ENCODE measurements at regions of chr6 and their contacts with region 1.

Region 1: GRCh38 chr6:46419576-46420002 is 71.7 kb downstream of the RCAN2 start:
- DNase-seq: peak; percentile 78
- H3K4me3 Mint-ChIP-seq: no peak overlapping the region
- H3K27ac Mint-ChIP-seq: no peak overlapping the region
- H3K4me1 Mint-ChIP-seq: peaks cover 7% of the 10 kb centered on the region
- H3K27me3 Mint-ChIP-seq: peaks cover 11% of the 10 kb centered on the region
- CTCF ChIP-seq: peak; percentile 73

Region 2: DNA sequence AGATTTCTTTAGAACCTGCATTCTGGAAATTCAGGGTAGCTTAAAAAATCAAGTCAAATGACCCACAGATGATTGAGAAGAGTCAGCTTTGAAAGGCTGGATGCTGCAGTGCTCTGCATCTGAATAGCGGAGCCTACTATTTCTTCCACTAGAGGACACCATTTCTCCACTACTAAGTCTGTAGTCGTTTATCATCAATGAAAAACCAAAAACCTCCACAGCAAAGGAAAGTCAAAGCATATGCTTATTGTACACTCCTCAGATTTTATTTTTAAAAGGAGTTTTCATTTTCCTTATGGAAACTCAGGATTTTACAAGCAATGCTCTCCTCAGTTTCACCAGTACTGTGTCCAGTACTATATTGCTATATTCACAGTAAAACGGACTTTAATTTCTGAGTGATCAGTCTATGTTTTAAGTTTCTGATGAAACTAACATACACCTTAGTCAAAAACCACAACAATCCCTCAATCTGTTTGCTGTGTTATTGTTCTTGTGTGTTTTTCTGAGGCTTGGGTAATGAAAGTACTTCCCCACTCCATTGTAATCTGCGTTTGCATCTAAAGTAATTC is 198.3 kb before region 1 on chr6:
- CTCF ChIA-PET with region 1: interaction called, 24 read pairs
- POLR2A ChIA-PET with region 1: no interaction called
- intact Hi-C with region 1: no loop called
- DNase-seq: peak; percentile 47
- H3K4me3 Mint-ChIP-seq: no peak overlapping the region
- H3K27ac Mint-ChIP-seq: no peak overlapping the region
- H3K4me1 Mint-ChIP-seq: peaks cover 5% of the 10 kb centered on the region
- H3K27me3 Mint-ChIP-seq: no peaks in the 10 kb centered on the region
- CTCF ChIP-seq: peak; percentile 65

Region 3: GRCh38 chr6:46491628-46492547 is 72.3 kb after region 1 on chr6:
- CTCF ChIA-PET with region 1: interaction called, 5 read pairs
- POLR2A ChIA-PET with region 1: no interaction called
- intact Hi-C with region 1: loop called (anchors 1 kb)
- DNase-seq: peak; percentile 37
- H3K4me3 Mint-ChIP-seq: peak overlapping the region; percentile 68
- H3K27ac Mint-ChIP-seq: no peak overlapping the region
- H3K4me1 Mint-ChIP-seq: peaks cover 11% of the 10 kb centered on the region
- H3K27me3 Mint-ChIP-seq: peaks cover 97% of the 10 kb centered on the region
- CTCF ChIP-seq: peak; percentile 10

Region 4: GRCh38 chr6:46573140-46573539 is 153.6 kb after region 1 on chr6:
- CTCF ChIA-PET with region 1: no interaction called
- POLR2A ChIA-PET with region 1: no interaction called
- intact Hi-C with region 1: no loop called
- DNase-seq: no peak
- H3K4me3 Mint-ChIP-seq: no peak overlapping the region
- H3K27ac Mint-ChIP-seq: no peak overlapping the region
- H3K4me1 Mint-ChIP-seq: no peaks in the 10 kb centered on the region
- H3K27me3 Mint-ChIP-seq: no peaks in the 10 kb centered on the region
- CTCF ChIP-seq: no peak

Region 5: GRCh38 chr6:46626228-46626909 is 206.8 kb after region 1 on chr6:
- CTCF ChIA-PET with region 1: interaction called, 6 read pairs
- POLR2A ChIA-PET with region 1: interaction called, 3 read pairs
- intact Hi-C with region 1: loop called (anchors 1 kb)
- DNase-seq: peak; percentile 62
- H3K4me3 Mint-ChIP-seq: no peak overlapping the region
- H3K27ac Mint-ChIP-seq: no peak overlapping the region
- H3K4me1 Mint-ChIP-seq: no peaks in the 10 kb centered on the region
- H3K27me3 Mint-ChIP-seq: no peaks in the 10 kb centered on the region
- CTCF ChIP-seq: peak; percentile 55

Region 6: DNA sequence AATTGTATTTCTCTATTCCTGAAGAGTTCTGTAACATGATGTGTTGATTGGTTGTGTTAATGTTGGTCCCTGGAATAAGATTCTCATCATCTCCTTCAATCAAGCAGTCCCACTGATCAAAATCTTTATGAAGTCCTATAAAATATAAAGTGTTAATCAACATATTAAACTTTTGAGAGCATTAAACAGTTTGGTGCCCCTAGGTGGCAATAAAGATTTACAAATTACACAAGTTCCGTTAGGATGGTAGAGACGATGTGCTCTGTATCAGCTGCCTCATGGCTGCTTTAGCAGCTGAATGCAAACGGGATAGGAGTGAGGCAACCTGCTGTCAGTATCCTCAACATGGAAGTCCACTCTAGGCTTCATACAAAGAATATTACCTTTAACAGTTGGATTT is 285.0 kb after region 1 on chr6:
- CTCF ChIA-PET with region 1: no interaction called
- POLR2A ChIA-PET with region 1: no interaction called
- intact Hi-C with region 1: loop called (anchors 5 kb)
- DNase-seq: peak; percentile 53
- H3K4me3 Mint-ChIP-seq: no peak overlapping the region
- H3K27ac Mint-ChIP-seq: no peak overlapping the region
- H3K4me1 Mint-ChIP-seq: peaks cover 1% of the 10 kb centered on the region
- H3K27me3 Mint-ChIP-seq: no peaks in the 10 kb centered on the region
- CTCF ChIP-seq: peak; percentile 38

Region 7: DNA sequence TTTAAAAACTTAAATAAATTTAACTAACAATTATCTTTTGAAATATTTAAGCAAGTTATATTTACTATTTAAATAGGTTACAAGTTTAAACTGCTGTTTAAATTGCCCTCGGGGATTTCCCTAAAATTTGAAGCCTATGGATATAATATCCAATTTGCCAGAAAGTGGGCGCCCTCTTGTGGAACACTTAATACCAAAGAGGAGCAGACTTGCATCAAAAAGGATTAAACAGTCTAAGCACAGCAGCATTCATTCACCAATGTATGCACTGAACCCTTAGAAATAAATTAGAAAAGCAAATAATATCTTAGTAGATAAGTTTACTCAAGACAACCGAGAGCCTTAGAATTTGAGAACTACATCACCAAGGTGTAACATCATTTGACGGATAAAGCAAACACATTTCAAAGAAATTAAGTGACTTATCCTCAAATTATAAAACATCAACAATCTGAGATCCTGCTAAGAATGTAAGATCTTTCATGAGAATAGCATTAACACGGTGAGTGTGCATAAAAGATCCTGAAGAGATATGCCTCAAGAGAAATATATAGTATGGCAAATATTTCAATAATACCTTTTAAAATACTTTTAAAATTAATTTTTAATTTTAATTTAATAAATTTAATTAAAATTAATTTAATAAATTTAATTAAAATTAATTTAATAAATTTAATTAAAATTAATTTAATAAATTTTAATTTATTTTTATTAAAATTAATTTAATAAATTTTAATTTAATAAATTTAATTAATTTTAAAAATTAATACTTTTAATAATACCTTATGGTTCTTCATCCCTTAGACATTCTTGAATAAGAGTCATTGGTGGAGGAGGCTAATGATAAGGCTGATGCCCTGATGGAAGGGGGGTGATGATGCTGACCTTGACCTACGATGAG is 362.1 kb after region 1 on chr6:
- CTCF ChIA-PET with region 1: interaction called, 3 read pairs
- POLR2A ChIA-PET with region 1: no interaction called
- intact Hi-C with region 1: loop called (anchors 1 kb)
- DNase-seq: peak; percentile 78
- H3K4me3 Mint-ChIP-seq: no peak overlapping the region
- H3K27ac Mint-ChIP-seq: no peak overlapping the region
- H3K4me1 Mint-ChIP-seq: no peaks in the 10 kb centered on the region
- H3K27me3 Mint-ChIP-seq: peaks cover 10% of the 10 kb centered on the region
- CTCF ChIP-seq: peak; percentile 53

Measured in MCF 10A (cell line).